ENCODE measurements at regions of chr4 and their contacts with region 1.

Region 1: GRCh38 chr4:22607382-22607781 is 85.4 kb upstream of the GBA3 start:
- DNase-seq: peak in 1 of 2 donors; percentile 30
- H3K4me3 ChIP-seq: no peak overlapping the region
- H3K27ac ChIP-seq: no peak overlapping the region
- H3K4me1 ChIP-seq: no peaks in the 10 kb centered on the region
- H3K27me3 ChIP-seq: no peaks in the 10 kb centered on the region
- CTCF ChIP-seq: peak; percentile 48 to 54

Region 2: DNA sequence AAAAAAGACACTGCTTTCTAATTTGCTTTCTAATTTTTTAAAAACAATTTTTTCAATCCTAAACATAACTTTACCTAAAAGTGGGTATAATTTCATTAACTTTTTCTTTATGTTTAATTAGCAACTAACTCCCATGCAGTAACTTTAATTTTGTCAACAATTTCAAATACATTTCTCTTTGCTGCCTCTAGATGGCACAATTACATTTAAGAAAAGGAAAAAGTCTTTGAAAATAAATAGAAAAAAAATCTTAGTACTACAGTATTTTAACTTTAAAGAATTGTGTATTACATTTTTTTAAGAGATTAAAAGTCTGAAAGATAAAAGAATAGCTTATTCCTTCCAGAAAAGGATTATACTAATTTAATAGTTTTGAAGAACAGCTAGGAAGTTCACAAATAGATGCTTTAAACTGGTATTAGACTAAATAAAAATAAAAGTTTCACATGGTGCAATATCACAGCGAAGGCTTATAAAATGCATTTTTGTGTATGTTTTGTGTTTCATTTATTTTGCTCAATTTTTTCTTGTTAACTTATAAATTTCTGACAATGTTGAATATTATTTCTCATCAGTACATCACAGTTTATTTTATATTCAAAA is 196.6 kb before region 1 on chr4:
- intact Hi-C with region 1: loop called (anchors 10 kb)
- DNase-seq: no peak
- H3K4me3 ChIP-seq: no peak overlapping the region
- H3K27ac ChIP-seq: no peak overlapping the region
- H3K4me1 ChIP-seq: no peaks in the 10 kb centered on the region
- H3K27me3 ChIP-seq: no peaks in the 10 kb centered on the region
- CTCF ChIP-seq: peak; percentile 46 to 56

Region 3: GRCh38 chr4:22573198-22573597 is 34.2 kb before region 1 on chr4:
- intact Hi-C with region 1: loop called (anchors 1 kb)
- DNase-seq: peak; percentile 45 to 81
- H3K4me3 ChIP-seq: no peak overlapping the region
- H3K27ac ChIP-seq: peak overlapping the region in 1 of 2 donors; percentile 21
- H3K4me1 ChIP-seq: peaks cover 0 to 20% (median 10%) of the 10 kb centered on the region in 4 donors
- H3K27me3 ChIP-seq: no peaks in the 10 kb centered on the region
- CTCF ChIP-seq: no peak

Region 4: DNA sequence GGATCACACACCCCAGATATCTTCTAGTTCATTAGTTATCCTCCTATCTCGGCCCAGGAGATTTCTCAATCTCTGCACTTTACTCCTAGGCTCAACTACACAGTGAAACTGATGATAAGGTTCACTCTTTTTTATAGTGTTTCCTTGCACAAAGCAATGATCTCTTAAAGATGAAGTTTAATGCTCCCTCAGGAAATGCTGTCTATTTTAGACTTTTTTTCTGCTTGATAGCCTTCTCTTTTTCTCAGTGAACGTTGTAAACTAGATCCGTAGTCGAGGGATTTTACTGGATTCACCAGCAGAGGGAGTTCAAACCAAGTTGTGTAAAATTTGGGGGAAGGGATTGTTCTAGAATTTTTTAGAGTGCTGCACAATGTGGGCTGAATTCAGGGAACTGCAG is 354.9 kb after region 1 on chr4:
- intact Hi-C with region 1: no loop called
- DNase-seq: no peak
- H3K4me3 ChIP-seq: no peak overlapping the region
- H3K27ac ChIP-seq: no peak overlapping the region
- H3K4me1 ChIP-seq: no peaks in the 10 kb centered on the region
- H3K27me3 ChIP-seq: no peaks in the 10 kb centered on the region
- CTCF ChIP-seq: no peak

Measured in tibial artery (tissue), 4 donors.